ENCODE measurements at regions of chr11 and their contacts with region 1.

Region 1: DNA sequence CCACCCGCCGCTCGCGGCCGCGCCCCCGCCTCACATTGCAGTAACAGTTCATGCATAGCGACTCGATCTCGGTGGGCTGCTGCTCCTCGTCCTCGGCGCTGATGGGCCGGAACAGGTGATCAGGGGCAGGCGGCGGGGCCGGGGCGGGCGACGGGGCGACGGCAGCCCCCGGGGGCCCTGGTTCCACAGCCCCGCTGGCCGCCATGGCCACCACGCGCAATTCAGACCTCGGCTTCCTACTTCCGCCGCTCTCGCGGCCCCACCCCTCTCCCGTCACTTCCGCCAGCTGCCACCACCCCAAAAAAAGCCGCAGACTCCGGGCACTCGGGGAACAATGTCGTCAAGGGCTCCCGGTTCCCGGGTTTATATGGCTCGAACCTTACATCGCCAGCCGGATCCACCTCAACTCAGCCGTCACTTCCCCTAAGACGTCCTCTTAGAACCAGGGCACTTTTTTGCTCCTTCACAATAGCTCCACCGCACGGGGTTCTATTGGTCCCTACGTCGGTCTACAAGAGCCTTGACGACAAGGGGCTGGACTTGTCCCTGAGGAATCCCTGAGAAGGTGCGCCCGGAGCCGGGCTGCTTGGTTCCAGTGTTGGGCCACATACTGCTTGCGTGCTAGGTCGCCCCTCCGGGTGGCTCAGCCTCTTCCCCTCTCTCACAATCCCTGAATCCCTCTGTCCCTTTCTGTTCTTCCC is at the start of gene ZPR1:
- DNase-seq: peak; percentile 65 to 91 (median 84)
- ATAC-seq: peak; percentile 89 to 93 (median 90)
- H3K4me3 ChIP-seq: peak within 1 kb of the TSS; percentile 82 to 93
- H3K4me3 Mint-ChIP-seq: peak within 1 kb of the TSS; percentile 82 to 97 (median 93)
- H3K27ac ChIP-seq: peak within 1 kb of the TSS; percentile 79
- H3K27ac Mint-ChIP-seq: peak within 1 kb of the TSS; percentile 94 to 96
- H3K4me1 ChIP-seq: peaks cover 9 to 37% of the 10 kb centered on the region in 2 experiments
- H3K4me1 Mint-ChIP-seq: peaks cover 44 to 62% (median 60%) of the 10 kb centered on the region in 3 donors
- H3K27me3 ChIP-seq: peaks cover 0 to 11% of the 10 kb centered on the region in 2 experiments
- H3K27me3 Mint-ChIP-seq: no peaks in the 10 kb centered on the region
- total RNA-seq, gene ZPR1: 57.8 to 113 (median 62.2) TPM

Region 2: DNA sequence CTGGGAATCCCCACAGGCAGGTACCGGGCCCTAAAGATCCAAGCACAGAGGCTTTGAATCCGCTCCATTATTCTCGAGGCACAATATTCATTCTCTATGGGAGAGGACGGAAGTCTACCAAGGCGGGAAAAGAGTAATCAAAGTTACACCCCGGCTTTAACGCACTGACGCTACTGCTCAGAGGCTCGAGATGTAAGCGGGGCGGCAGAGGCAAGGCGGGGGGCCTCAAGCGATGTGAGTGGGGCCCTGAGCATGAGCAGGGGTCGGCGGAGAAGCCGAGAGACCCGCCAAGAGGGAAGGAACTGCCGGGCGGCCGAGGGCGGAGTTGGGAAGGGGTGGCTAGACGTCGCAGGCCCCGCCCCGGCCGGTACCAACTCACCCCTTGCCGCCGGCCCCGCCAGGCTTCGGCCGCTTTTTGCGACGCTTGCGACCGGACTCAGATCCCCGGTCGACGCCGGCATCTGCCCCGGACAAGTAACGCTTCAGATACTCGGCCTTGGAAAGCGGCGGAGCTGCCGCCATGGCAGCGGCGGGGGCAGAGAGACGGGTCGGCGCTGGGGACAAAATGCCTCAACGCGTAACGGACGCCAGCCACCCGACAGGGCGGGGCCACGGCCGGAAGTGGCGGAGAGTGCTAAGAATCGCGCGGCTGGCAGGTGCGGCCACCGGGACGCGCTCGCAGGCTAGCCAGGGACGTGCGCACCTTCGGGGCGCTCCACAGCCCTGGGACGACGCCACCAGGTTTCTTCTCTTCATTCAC is 15.3 kb before region 1 on chr11 and contains the start of gene BUD13:
- CTCF ChIA-PET with region 1: interaction called, 3 to 10 read pairs
- POLR2A ChIA-PET with region 1: interaction called, 3 to 11 read pairs
- DNase-seq: peak; percentile 82 to 97 (median 92)
- ATAC-seq: peak; percentile 92 to 95 (median 94)
- H3K4me3 ChIP-seq: peak within 1 kb of the TSS; percentile 66 to 99
- H3K4me3 Mint-ChIP-seq: peak within 1 kb of the TSS; percentile 91 to 99 (median 98)
- H3K27ac ChIP-seq: peak within 1 kb of the TSS; percentile 85
- H3K27ac Mint-ChIP-seq: peak within 1 kb of the TSS; percentile 98 to 99
- H3K4me1 ChIP-seq: peaks cover 18 to 23% of the 10 kb centered on the region in 2 experiments
- H3K4me1 Mint-ChIP-seq: peaks cover 32 to 39% (median 39%) of the 10 kb centered on the region in 3 donors
- H3K27me3 ChIP-seq: no peaks in the 10 kb centered on the region
- H3K27me3 Mint-ChIP-seq: no peaks in the 10 kb centered on the region
- total RNA-seq, gene BUD13: 9.8 to 23.0 (median 20.5) TPM

Region 3: DNA sequence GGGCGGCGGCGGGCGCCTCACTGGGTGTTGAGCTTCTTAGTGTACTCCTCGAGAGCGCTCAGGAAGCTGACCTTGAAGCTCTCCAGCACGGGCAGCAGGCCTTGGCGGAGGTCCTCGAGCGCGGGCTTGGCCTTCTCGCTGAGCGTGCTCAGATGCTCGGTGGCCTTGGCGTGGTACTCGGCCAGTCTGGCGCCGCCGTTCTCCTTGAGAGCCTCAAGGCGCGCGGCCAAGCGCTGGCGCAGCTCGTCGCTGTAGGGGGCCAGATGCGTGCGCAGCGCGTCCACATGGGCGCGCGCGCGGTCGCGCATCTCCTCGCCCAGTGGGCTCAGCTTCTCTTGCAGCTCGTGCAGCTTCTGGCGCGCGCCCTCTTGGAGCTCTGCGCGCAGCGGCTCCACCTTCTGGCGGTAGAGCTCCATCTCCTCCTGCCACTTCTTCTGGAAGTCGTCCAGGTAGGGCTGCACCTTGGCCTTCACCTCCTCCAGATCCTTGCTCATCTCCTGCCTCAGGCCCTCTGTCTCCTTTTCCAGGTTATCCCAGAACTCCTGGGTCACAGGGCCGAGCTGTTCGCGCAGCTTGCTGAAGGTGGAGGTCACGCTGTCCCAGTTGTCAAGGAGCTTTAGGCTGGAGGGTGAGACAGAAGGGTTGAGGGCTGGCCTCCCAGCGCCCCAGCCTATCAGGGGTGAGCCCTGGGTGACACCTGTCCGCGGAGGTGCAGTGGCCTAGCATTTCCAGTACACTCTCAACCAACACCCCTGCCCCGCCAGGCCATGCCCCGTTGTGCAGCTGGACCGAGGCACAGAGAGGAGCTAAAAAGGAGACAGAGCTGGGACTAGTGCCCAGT is 48.1 kb after region 1 on chr11:
- CTCF ChIA-PET with region 1: interaction called, 10 to 38 read pairs
- POLR2A ChIA-PET with region 1: interaction called in 1 of 2 experiments, 4 read pairs
- DNase-seq: peak; percentile 64 to 89 (median 77)
- ATAC-seq: peak; percentile 93 to 95 (median 94)
- H3K4me3 ChIP-seq: peak overlapping the region; percentile 51 to 58
- H3K4me3 Mint-ChIP-seq: peak overlapping the region; percentile 74 to 83 (median 77)
- H3K27ac ChIP-seq: no peak overlapping the region
- H3K27ac Mint-ChIP-seq: peak overlapping the region; percentile 46 to 71
- H3K4me1 ChIP-seq: peaks cover 0 to 20% of the 10 kb centered on the region in 2 experiments
- H3K4me1 Mint-ChIP-seq: peaks cover 14 to 18% (median 16%) of the 10 kb centered on the region in 3 donors
- H3K27me3 ChIP-seq: peaks cover 0 to 4% of the 10 kb centered on the region in 2 experiments
- H3K27me3 Mint-ChIP-seq: no peaks in the 10 kb centered on the region

Region 4: GRCh38 chr11:116853461-116854073 is 65.6 kb after region 1 on chr11:
- CTCF ChIA-PET with region 1: interaction called in 1 of 2 experiments, 11 read pairs
- POLR2A ChIA-PET with region 1: interaction called in 1 of 2 experiments, 3 read pairs
- DNase-seq: peak in 34 of 35 experiments; percentile 10 to 85 (median 56)
- ATAC-seq: peak; percentile 96 to 97 (median 96)
- H3K4me3 ChIP-seq: peak overlapping the region; percentile 5 to 44
- H3K4me3 Mint-ChIP-seq: peak overlapping the region; percentile 61 to 68 (median 64)
- H3K27ac ChIP-seq: peak overlapping the region; percentile 87
- H3K27ac Mint-ChIP-seq: peak overlapping the region; percentile 95 to 96
- H3K4me1 ChIP-seq: peaks cover 42 to 62% of the 10 kb centered on the region in 2 experiments
- H3K4me1 Mint-ChIP-seq: peaks cover 79 to 80% (median 80%) of the 10 kb centered on the region in 3 donors
- H3K27me3 ChIP-seq: no peaks in the 10 kb centered on the region
- H3K27me3 Mint-ChIP-seq: no peaks in the 10 kb centered on the region

Region 5: DNA sequence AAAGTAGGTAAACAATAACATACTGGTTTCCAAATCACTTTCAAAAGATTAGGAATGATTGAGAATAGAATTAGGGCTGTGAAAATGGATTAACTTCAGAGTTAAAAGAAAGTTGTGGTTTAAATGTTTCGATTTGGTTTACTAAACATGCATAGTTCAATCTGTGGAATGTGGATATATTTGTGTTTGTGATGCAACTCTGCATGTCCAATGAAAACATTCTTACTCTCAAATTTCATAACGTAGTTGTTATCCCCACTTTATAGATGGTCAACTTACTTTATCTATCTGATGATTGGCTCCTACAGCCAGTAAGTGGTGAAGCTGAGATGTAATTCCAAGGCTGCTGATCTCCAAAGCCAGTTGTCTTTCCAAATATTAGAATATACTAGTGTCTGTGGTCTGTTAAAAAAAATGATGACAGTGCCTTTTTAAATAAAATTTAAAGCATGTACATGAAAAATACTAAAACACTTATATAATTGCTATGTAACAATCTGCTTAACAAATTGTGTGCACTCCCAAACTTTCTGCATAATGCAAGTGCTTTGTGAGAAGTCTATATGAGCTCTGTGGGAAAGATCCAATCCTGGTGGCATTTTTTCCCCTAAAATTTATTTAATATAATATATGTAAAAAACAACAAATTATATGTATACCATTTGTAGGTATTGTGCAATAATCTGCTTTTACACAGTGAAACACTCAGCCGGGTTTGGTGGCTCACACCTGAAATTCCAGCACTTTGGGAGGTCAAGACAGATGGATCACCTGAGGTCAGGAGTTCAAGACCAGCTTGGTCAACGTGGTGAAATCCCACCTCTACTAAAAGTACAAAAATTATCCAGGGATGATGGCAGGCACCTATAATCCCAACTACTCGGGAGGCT is 320.0 kb after region 1 on chr11:
- CTCF ChIA-PET with region 1: interaction called, 8 to 32 read pairs
- POLR2A ChIA-PET with region 1: interaction called in 1 of 2 experiments, 3 read pairs
- DNase-seq: no peak
- ATAC-seq: no peak
- H3K4me3 ChIP-seq: no peak overlapping the region
- H3K4me3 Mint-ChIP-seq: no peak overlapping the region
- H3K27ac ChIP-seq: no peak overlapping the region
- H3K27ac Mint-ChIP-seq: no peak overlapping the region
- H3K4me1 ChIP-seq: peaks cover 0 to 5% of the 10 kb centered on the region in 2 experiments
- H3K4me1 Mint-ChIP-seq: peaks cover 0 to 6% (median 2%) of the 10 kb centered on the region in 3 donors
- H3K27me3 ChIP-seq: peaks cover 0 to 11% of the 10 kb centered on the region in 2 experiments
- H3K27me3 Mint-ChIP-seq: no peaks in the 10 kb centered on the region

Measured in T-cell (primary cell).